Mammary epithelial cell (primary cell): ENCODE measurements at regions of chr14 and their contacts with region 1.

Region 1: GRCh38 chr14:94665121-94665520 is 52.9 kb downstream of the SERPINA3 start:
- DNase-seq: no peak
- H3K4me3 ChIP-seq: no peak overlapping the region
- H3K27ac ChIP-seq: no peak overlapping the region
- H3K4me1 ChIP-seq: no peaks in the 10 kb centered on the region
- H3K27me3 ChIP-seq: no peaks in the 10 kb centered on the region
- CTCF ChIP-seq: no peak

Region 2: DNA sequence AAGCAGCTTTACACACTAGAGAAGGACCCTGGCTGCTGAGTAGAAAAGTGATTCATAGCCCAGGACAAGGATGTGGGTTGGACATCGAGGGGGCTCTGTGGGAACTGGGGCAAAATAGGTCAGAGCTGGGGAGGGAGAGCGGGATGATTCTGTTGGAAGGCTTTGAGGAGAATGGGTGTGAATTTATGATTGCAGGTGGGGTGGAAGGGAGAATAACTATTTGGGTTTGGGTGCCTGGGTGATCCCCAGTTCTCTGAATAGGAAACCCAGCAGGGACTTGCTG is 39.8 kb before region 1 on chr14:
- CTCF ChIA-PET with region 1: no interaction called
- dilution Hi-C with region 1: loop called (anchors 5 kb)
- in situ Hi-C with region 1: no loop called
- intact Hi-C with region 1: no loop called
- DNase-seq: no peak
- H3K4me3 ChIP-seq: no peak overlapping the region
- H3K27ac ChIP-seq: no peak overlapping the region
- H3K4me1 ChIP-seq: no peaks in the 10 kb centered on the region
- H3K27me3 ChIP-seq: no peaks in the 10 kb centered on the region
- CTCF ChIP-seq: no peak

Region 3: DNA sequence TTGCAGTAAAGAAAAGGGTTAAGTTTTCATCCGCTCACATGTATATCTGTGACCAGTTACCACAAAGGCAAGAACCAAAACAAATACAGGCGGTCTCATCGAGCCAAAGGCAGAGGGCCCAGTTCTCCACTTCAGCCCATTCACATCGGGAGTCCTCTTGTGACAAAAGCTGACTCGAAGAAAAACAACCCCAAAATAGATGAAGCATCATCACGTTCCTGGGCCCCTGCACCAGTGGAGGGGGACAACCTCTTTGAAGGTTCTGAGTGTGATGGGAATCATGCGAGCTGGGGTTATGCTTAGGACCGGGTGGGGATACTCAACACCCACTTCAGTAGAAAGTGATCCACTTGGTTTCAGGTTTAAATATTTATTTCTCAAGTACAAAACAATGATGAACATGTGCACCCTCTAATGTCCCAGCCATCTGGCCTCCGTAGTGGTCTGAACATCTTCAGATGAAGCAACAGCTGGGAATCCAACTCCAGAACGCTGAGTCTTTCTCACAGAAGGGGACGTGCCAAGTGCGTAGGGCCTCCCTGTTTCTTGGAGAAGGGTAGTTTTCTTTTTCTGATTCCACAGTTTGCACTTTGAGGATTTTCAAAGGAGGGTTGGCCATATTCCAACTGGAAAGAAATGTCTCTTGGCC is 96.4 kb after region 1 on chr14:
- CTCF ChIA-PET with region 1: no interaction called
- dilution Hi-C with region 1: loop called (anchors 5 kb)
- in situ Hi-C with region 1: no loop called
- intact Hi-C with region 1: no loop called
- DNase-seq: no peak
- H3K4me3 ChIP-seq: no peak overlapping the region
- H3K27ac ChIP-seq: no peak overlapping the region
- H3K4me1 ChIP-seq: no peaks in the 10 kb centered on the region
- H3K27me3 ChIP-seq: peaks cover 2% of the 10 kb centered on the region
- CTCF ChIP-seq: no peak

Region 4: DNA sequence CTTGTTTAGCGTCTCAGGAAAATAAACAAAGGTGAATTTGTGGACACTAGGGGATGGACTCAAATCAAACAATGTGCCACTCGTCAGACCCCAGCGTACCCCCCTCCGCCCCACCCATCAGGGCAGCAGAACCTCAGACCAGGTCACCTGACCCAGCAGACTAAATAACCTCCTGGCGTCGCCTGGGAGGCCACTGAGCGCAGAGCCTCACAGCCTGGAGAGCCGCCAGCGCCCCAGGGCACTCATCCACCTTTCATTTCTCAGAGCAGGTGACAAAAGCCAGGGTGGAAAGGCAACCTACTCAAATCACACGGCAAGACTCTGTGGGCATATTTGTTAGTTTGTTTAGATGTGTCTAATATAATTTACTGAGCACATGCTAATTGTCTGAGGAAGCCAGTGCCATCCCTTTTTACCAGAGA is 391.4 kb after region 1 on chr14:
- CTCF ChIA-PET with region 1: no interaction called
- dilution Hi-C with region 1: no loop called
- in situ Hi-C with region 1: no loop called
- intact Hi-C with region 1: no loop called
- DNase-seq: no peak
- H3K4me3 ChIP-seq: no peak overlapping the region
- H3K27ac ChIP-seq: no peak overlapping the region
- H3K4me1 ChIP-seq: no peaks in the 10 kb centered on the region
- H3K27me3 ChIP-seq: no peaks in the 10 kb centered on the region
- CTCF ChIP-seq: no peak

Region 5: DNA sequence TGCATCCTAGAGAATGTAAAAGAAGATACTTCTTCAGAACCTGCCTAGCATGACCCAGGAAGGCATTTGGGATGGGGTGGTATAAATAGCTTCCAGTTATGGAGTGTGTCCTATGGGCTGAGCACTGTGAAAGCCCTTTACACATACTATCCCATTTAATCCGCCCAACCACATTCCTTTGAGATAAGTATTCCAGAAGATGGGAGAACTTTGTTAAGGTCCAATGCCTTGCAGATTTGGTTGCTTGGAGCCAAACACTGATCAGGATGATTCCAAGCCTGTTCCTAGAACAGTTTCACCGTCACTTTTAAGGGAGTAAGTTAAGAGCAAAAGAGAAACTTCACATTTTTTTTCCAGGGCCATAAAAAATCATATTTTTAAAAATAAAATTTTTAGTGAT is 737.1 kb after region 1 on chr14:
- CTCF ChIA-PET with region 1: no interaction called
- dilution Hi-C with region 1: no loop called
- in situ Hi-C with region 1: no loop called
- intact Hi-C with region 1: no loop called
- DNase-seq: no peak
- H3K4me3 ChIP-seq: no peak overlapping the region
- H3K27ac ChIP-seq: no peak overlapping the region
- H3K4me1 ChIP-seq: no peaks in the 10 kb centered on the region
- H3K27me3 ChIP-seq: no peaks in the 10 kb centered on the region
- CTCF ChIP-seq: no peak